ENCODE measurements at regions of chr3 and their contacts with region 1.

Region 1: GRCh38 chr3:43540624-43541023 is 81.2 kb downstream of the ANO10 start:
- DNase-seq: no peak
- ATAC-seq: no peak
- H3K4me3 ChIP-seq: no peak overlapping the region
- H3K27ac ChIP-seq: no peak overlapping the region
- H3K4me1 ChIP-seq: no peaks in the 10 kb centered on the region
- H3K27me3 ChIP-seq: no peaks in the 10 kb centered on the region
- CTCF ChIP-seq: no peak
- POLR2A ChIP-seq: no peak

Region 2: GRCh38 chr3:44198284-44199269 is 658.0 kb after region 1 on chr3:
- in situ Hi-C with region 1: loop called (anchors 5 to 10 kb)
- intact Hi-C with region 1: loop called (anchors 1 kb)
- DNase-seq: peak; percentile 36 to 39
- ATAC-seq: peak; percentile 80 to 82
- H3K4me3 ChIP-seq: no peak overlapping the region
- H3K27ac ChIP-seq: no peak overlapping the region
- H3K4me1 ChIP-seq: no peaks in the 10 kb centered on the region
- H3K27me3 ChIP-seq: no peaks in the 10 kb centered on the region
- CTCF ChIP-seq: peak; percentile 43 to 82 (median 71)
- POLR2A ChIP-seq: no peak

Region 3: GRCh38 chr3:44235604-44236484 is 695.2 kb after region 1 on chr3:
- in situ Hi-C with region 1: no loop called
- intact Hi-C with region 1: loop called (anchors 2 kb)
- DNase-seq: peak; percentile 33 to 59
- ATAC-seq: peak; percentile 94 to 99
- H3K4me3 ChIP-seq: no peak overlapping the region
- H3K27ac ChIP-seq: no peak overlapping the region
- H3K4me1 ChIP-seq: no peaks in the 10 kb centered on the region
- H3K27me3 ChIP-seq: no peaks in the 10 kb centered on the region
- CTCF ChIP-seq: peak in 4 of 5 experiments; percentile 52 to 71 (median 63)
- POLR2A ChIP-seq: no peak

Measured in gastrocnemius medialis (tissue), 4 donors.